ENCODE measurements at regions of chr16 and their contacts with region 1.

Region 1: GRCh38 chr16:69436896-69437295 is 12.5 kb downstream of the CYB5B start:
- DNase-seq: no peak
- ATAC-seq: no peak
- H3K4me3 ChIP-seq: no peak overlapping the region
- H3K4me3 Mint-ChIP-seq: no peak overlapping the region
- H3K27ac ChIP-seq: no peak overlapping the region
- H3K27ac Mint-ChIP-seq: peak overlapping the region; percentile 53
- H3K4me1 ChIP-seq: peaks cover 0 to 3% of the 10 kb centered on the region in 2 experiments
- H3K4me1 Mint-ChIP-seq: peaks cover 71 to 79% (median 73%) of the 10 kb centered on the region in 3 donors
- H3K27me3 ChIP-seq: no peaks in the 10 kb centered on the region
- H3K27me3 Mint-ChIP-seq: no peaks in the 10 kb centered on the region

Region 2: GRCh38 chr16:69132424-69133252 is 304.3 kb before region 1 on chr16 and contains the starts of genes CHTF8 and UTP4:
- CTCF ChIA-PET with region 1: no interaction called
- POLR2A ChIA-PET with region 1: interaction called in 1 of 2 experiments, 11 read pairs
- DNase-seq: peak; percentile 68 to 92 (median 84)
- ATAC-seq: peak; percentile 91 to 94 (median 93)
- H3K4me3 ChIP-seq: peak within 1 kb of the TSS; percentile 80 to 92
- H3K4me3 Mint-ChIP-seq: peak within 1 kb of the TSS; percentile 92 to 95 (median 94)
- H3K27ac ChIP-seq: peak within 1 kb of the TSS; percentile 59
- H3K27ac Mint-ChIP-seq: peak within 1 kb of the TSS; percentile 88 to 93
- H3K4me1 ChIP-seq: peaks cover 16 to 20% of the 10 kb centered on the region in 2 experiments
- H3K4me1 Mint-ChIP-seq: peaks cover 57 to 62% (median 61%) of the 10 kb centered on the region in 3 donors
- H3K27me3 ChIP-seq: no peaks in the 10 kb centered on the region
- H3K27me3 Mint-ChIP-seq: no peaks in the 10 kb centered on the region
- total RNA-seq, gene CHTF8: 64.8 to 138 (median 124) TPM
- total RNA-seq, gene UTP4: 30.3 to 42.5 (median 37.8) TPM

Measured in T-cell (primary cell).